Activated T-helper 1 cell treated with anti-CD3 and anti-CD28 coated beads, Interleukin-12 subunit alpha, Interleukin-12 subunit beta, Interleukin-2, Interleukin-4 antibody, amounts not matched to agents 30 ng/mL and 10 ng/mL and 1 ng/mL, durations not matched to agents 14 hours and 24 hours and 36 hours (primary cell): ENCODE measurements at regions of chr10 and their contacts with region 1.

Region 1: DNA sequence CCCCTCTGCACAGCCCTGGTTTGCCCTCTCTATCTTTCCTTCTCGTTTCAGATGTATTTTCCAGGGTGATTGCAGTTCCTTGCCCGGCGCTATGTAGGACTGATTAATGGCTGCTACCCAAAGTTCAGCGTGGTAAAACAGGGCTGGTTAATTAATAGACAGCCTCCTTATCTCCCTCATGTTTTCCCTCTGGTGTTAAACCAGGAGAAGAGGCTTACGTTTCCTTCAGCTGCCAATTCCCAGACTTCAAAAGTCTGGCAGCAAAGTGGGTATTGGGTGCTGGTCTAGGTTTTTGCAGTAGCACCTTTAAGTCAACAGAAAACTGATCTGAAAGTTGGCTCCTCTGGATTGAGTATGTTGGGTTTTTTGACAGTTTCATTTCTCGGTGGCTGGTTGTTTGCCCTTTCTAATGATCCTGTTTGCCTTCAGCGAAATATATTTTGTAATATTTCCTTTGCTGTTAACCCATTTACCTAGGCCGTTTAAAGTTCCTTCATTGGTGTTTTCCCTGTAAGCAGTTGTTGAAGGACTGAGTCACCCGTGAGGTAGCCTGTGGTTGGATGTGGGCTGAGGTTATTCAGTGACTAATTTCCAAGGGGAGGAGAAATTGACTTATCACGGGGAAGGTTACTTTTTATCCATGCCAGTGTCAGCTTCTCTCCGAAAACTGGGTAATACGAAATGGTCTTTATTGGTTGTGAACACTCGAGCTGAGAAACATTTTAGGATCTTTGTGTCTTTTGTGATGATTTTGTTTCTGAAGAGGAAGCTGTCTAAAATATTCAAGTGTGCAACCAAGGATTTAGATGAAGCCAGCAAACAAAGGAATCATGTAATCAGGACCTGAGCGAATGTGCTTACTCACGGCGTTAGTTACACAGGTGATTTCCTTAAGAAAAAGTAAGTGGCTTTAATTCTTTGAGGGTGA is 257.2 kb downstream of the KIAA1217 start:
- DNase-seq: peak; percentile 61
- H3K4me3 Mint-ChIP-seq: peak overlapping the region; percentile 79
- H3K27ac Mint-ChIP-seq: peak overlapping the region; percentile 77
- H3K4me1 Mint-ChIP-seq: peaks cover 61% of the 10 kb centered on the region
- H3K27me3 Mint-ChIP-seq: peaks cover 6% of the 10 kb centered on the region

Region 2: GRCh38 chr10:23362879-23363792 is 1103.0 kb before region 1 on chr10:
- intact Hi-C with region 1: loop called (anchors 5 kb)
- DNase-seq: peak; percentile 55
- H3K4me3 Mint-ChIP-seq: peak overlapping the region; percentile 78
- H3K27ac Mint-ChIP-seq: peak overlapping the region; percentile 93
- H3K4me1 Mint-ChIP-seq: peaks cover 54% of the 10 kb centered on the region
- H3K27me3 Mint-ChIP-seq: no peaks in the 10 kb centered on the region

Region 3: GRCh38 chr10:24299578-24300260 is 166.4 kb before region 1 on chr10:
- intact Hi-C with region 1: loop called (anchors 1 kb)
- DNase-seq: no peak
- H3K4me3 Mint-ChIP-seq: no peak overlapping the region
- H3K27ac Mint-ChIP-seq: no peak overlapping the region
- H3K4me1 Mint-ChIP-seq: no peaks in the 10 kb centered on the region
- H3K27me3 Mint-ChIP-seq: no peaks in the 10 kb centered on the region

Region 4: GRCh38 chr10:24449321-24449740 is 16.8 kb before region 1 on chr10:
- intact Hi-C with region 1: loop called (anchors 1 kb)
- DNase-seq: no peak
- H3K4me3 Mint-ChIP-seq: peak overlapping the region; percentile 4
- H3K27ac Mint-ChIP-seq: peak overlapping the region; percentile 72
- H3K4me1 Mint-ChIP-seq: peaks cover 41% of the 10 kb centered on the region
- H3K27me3 Mint-ChIP-seq: peaks cover 14% of the 10 kb centered on the region

Region 5: GRCh38 chr10:24496906-24497305 is 30.8 kb after region 1 on chr10:
- intact Hi-C with region 1: no loop called
- DNase-seq: no peak
- H3K4me3 Mint-ChIP-seq: no peak overlapping the region
- H3K27ac Mint-ChIP-seq: no peak overlapping the region
- H3K4me1 Mint-ChIP-seq: peaks cover 17% of the 10 kb centered on the region
- H3K27me3 Mint-ChIP-seq: peaks cover 8% of the 10 kb centered on the region

Region 6: DNA sequence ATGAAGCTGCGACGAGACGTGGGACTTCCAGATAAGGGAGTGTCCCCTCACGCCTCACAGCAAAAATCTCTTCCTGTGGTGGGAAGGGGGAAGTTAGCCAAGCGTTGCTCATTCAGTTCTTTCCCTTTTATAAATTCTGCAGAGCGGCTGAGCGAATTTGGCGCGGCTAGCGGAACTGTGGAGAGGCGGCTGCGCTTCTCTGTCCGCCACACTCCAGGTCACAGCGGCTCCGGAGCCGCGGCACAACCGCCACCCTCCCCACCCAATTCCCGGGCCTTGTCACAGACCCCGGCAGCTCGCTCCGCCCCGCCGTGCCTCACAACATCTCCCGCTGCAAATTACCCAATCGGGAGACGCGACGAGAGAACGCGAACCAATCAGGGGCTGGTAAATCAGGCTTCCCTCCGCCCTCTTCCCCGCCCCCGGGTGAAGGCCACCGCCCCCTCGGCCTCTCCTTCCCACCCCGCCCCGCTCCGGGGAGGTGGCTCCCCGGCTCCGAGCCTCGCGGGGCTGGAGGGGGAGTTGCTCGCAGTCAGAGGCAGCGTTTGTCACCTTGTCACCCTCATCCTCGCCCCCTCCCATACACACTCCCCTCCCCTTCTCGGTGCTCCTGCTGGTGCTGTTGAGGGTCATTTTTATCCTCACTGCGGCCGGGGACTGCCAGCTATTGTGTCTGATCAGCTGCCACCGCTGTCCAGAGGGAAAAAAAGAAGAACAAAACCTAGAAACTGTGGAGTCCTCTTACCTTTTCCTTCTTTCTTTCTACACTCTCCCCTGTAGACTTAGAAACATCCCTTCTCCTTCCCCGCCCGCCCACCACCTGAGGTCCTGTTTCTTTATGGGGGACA is 258.4 kb after region 1 on chr10:
- intact Hi-C with region 1: loop called (anchors 10 kb)
- DNase-seq: peak; percentile 92
- H3K4me3 Mint-ChIP-seq: peak overlapping the region; percentile 93
- H3K27ac Mint-ChIP-seq: peak overlapping the region; percentile 96
- H3K4me1 Mint-ChIP-seq: peaks cover 29% of the 10 kb centered on the region
- H3K27me3 Mint-ChIP-seq: no peaks in the 10 kb centered on the region

Region 7: GRCh38 chr10:24920907-24921881 is 455.0 kb after region 1 on chr10:
- intact Hi-C with region 1: loop called (anchors 5 kb)
- DNase-seq: peak; percentile 33
- H3K4me3 Mint-ChIP-seq: peak overlapping the region; percentile 53
- H3K27ac Mint-ChIP-seq: peak overlapping the region; percentile 92
- H3K4me1 Mint-ChIP-seq: peaks cover 30% of the 10 kb centered on the region
- H3K27me3 Mint-ChIP-seq: no peaks in the 10 kb centered on the region